ENCODE measurements at regions of chr7 and their contacts with region 1.

Region 1: DNA sequence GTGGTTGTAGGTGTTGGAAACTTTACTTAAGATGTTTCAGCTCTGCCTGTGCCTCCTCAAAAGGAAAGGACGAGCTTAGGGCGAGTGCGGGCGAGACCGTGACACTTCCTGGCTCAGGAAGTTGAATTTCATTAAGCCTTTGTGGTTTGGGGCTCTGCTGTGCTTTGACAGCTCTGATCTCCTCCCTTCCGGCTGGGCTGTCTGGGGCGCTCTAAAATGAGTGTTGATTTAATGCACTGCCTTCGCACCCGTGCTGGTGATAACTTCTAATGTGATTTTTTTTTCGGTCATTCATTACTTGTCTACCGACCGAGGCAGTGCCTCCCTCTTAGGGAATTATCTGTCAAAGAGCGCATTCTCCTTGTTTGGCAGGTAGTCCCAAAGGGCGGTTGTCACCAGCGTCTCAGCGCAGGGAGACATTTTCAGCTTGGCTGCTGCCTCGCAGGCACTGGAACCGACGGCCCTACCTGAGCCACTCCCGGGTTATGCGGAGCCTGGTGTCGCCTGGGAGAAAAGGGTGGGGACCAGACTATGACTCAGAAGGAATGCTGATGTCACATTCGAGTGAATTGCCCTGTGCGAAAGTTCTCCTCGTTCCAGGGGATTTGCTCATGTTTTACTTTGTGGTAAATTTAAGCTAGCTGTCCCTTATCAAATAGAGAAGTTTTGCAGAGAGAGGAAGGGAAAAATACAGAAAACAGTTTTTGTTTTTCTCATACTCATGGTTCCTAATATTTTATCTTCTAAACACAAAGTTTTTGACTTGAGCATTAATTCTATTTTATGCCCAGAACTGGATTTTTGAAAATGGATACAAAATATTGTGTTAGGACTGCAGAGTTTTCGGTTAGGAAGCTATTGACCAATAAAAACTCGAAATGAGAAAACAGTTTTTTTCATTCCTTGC is 920 bp downstream of the TES start:
- DNase-seq: peak; percentile 64 to 93
- H3K4me3 ChIP-seq: peak overlapping the region; percentile 85 to 89
- H3K27ac ChIP-seq: peak overlapping the region; percentile 91 to 99
- H3K4me1 ChIP-seq: peaks cover 5 to 22% of the 10 kb centered on the region in 2 donors
- H3K27me3 ChIP-seq: no peaks in the 10 kb centered on the region
- CTCF ChIP-seq: no peak

Region 2: DNA sequence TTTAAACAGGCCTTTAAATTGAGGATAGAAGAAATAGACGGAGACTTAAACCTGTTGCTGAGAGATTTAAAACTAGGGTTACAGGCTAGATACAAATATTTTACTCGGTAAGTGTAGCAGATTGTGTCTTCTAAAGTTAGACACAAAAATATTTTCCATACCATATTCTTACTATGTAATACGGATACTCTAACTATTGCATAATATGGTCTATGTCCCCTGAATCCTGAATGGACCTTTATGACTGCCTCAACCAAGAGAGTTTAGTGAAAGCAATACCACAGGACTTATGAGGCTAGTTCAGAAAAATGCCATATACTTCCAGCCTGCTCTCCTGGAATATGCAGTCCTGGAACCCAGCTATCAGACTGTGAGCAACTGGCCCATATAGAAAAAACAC is 14.3 kb before region 1 on chr7:
- intact Hi-C with region 1: loop called (anchors 1 kb)
- DNase-seq: no peak
- H3K4me3 ChIP-seq: no peak overlapping the region
- H3K27ac ChIP-seq: no peak overlapping the region
- H3K4me1 ChIP-seq: peaks cover 0 to 13% of the 10 kb centered on the region in 2 donors
- H3K27me3 ChIP-seq: no peaks in the 10 kb centered on the region
- CTCF ChIP-seq: no peak

Region 3: GRCh38 chr7:116284390-116284789 is 73.1 kb after region 1 on chr7:
- intact Hi-C with region 1: no loop called
- DNase-seq: no peak
- H3K4me3 ChIP-seq: no peak overlapping the region
- H3K27ac ChIP-seq: no peak overlapping the region
- H3K4me1 ChIP-seq: no peaks in the 10 kb centered on the region
- H3K27me3 ChIP-seq: no peaks in the 10 kb centered on the region
- CTCF ChIP-seq: no peak

Region 4: GRCh38 chr7:116912269-116912909 is 701.1 kb after region 1 on chr7:
- intact Hi-C with region 1: no loop called
- DNase-seq: no peak
- H3K4me3 ChIP-seq: no peak overlapping the region
- H3K27ac ChIP-seq: no peak overlapping the region
- H3K4me1 ChIP-seq: no peaks in the 10 kb centered on the region
- H3K27me3 ChIP-seq: no peaks in the 10 kb centered on the region
- CTCF ChIP-seq: no peak